Ascending aorta (tissue), 2 donors: ENCODE measurements at regions of chr6 and their contacts with region 1.

Region 1: DNA sequence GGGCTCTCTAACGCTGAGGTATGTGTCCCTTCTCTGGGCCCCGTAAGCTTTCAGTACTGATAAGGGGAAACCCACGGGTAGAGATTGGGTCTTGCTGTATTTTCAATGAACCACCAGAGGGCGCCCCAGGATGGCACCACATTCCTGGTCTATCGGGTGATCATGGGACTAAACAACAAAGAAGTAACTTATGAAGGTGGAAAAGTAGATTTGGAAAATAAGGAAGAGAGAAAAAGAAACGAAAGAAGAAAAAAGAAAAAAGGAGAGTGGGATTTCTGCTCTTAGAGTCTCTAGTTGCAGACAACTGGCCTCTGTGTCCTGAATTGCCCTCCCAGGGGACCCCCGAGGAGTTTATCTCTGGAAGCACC is 93.8 kb downstream of the GMPR start:
- DNase-seq: peak in 1 of 2 donors; percentile 87
- H3K4me3 ChIP-seq: no peak overlapping the region
- H3K27ac ChIP-seq: no peak overlapping the region
- H3K4me1 ChIP-seq: peaks cover 0 to 17% of the 10 kb centered on the region in 2 donors
- H3K27me3 ChIP-seq: no peaks in the 10 kb centered on the region
- CTCF ChIP-seq: peak; percentile 87 to 92 (median 91)

Region 2: GRCh38 chr6:16319813-16320532 is 12.2 kb before region 1 on chr6:
- intact Hi-C with region 1: loop called (anchors 2 kb)
- DNase-seq: peak; percentile 88 to 94
- H3K4me3 ChIP-seq: peak overlapping the region; percentile 42 to 56
- H3K27ac ChIP-seq: peak overlapping the region; percentile 96
- H3K4me1 ChIP-seq: peaks cover 11 to 63% of the 10 kb centered on the region in 2 donors
- H3K27me3 ChIP-seq: no peaks in the 10 kb centered on the region
- CTCF ChIP-seq: no peak

Region 3: GRCh38 chr6:16494793-16495192 is 162.6 kb after region 1 on chr6:
- intact Hi-C with region 1: loop called (anchors 5 kb)
- DNase-seq: no peak
- H3K4me3 ChIP-seq: no peak overlapping the region
- H3K27ac ChIP-seq: no peak overlapping the region
- H3K4me1 ChIP-seq: peaks cover 0 to 10% of the 10 kb centered on the region in 2 donors
- H3K27me3 ChIP-seq: no peaks in the 10 kb centered on the region
- CTCF ChIP-seq: no peak

Region 4: GRCh38 chr6:16770701-16771569 is 438.8 kb after region 1 on chr6:
- intact Hi-C with region 1: loop called (anchors 2 kb)
- DNase-seq: peak; percentile 22 to 86
- H3K4me3 ChIP-seq: no peak overlapping the region
- H3K27ac ChIP-seq: peak overlapping the region; percentile 32 to 51
- H3K4me1 ChIP-seq: peaks cover 6 to 25% of the 10 kb centered on the region in 2 donors
- H3K27me3 ChIP-seq: no peaks in the 10 kb centered on the region
- CTCF ChIP-seq: peak; percentile 79 to 90 (median 87)